AG04449 (cell line): ENCODE measurements at regions of chr22 and their contacts with region 1.

Region 1: DNA sequence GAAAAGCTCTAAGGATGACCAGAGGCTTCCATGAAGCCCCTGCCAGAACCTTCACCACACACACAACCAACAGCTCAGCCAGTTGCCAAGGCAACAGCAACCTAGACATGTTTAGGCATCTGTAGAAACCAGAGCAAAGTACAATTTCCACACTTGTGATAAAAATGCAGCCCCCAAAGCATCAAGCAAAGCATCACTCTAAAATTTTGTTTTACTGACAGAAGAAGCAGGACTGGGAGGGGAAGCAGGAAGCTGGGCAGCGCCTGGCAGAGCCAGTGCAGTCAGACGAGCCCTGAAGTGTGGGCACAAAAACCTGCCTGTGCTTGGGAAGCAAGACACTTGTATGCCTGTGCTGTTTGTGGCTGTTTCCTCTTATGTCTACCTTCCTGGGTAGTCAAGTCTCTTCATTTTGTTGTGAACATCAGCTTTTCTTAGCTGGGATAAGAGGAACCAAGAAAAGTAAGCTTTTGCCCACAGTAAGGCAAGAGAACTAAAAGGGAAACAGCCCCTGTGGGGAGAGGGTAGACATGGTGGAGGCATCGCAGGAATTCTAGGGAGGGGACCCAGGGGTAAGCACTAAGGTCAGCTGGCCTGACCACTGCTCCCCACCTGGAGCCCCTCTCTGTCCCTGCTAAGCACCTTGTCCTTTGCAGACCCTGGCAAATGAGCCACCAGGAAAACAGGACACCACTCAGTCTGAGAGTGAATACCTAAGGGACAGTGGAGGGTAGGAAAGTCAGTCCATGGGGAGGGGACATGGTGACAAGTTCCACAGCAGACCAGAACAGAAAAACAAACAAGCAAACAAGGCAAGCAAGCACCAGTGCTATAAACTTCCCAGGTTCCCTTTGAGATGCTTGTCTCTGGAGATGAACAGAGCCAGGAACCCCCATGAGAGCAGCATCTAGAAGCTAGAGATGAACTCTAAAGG is 13.4 kb downstream of the PACSIN2 start:
- DNase-seq: no peak
- H3K4me3 ChIP-seq: peak overlapping the region; percentile 38
- CTCF ChIP-seq: no peak

Region 2: DNA sequence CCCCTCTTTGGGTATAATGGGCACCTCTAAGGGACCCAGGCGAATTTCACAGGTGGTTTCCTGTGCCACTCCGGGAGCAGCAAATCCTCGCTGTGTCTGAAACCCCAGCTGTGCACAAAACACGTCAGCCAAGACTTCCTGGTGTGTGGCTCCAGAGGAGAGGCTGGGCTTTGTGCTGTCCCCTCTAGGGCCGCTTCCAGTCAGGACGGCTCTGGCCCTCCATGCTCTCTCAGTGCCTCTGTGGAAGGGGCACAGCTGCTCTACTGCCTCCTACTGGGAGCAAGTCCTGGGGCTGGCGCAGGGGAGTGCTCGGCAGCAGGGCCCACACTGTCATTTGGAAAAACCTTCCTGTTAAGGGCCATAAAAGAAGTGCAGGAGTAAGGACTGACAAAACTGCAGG is 120.7 kb before region 1 on chr22:
- CTCF ChIA-PET with region 1: no interaction called
- POLR2A ChIA-PET with region 1: no interaction called
- DNase-seq: no peak
- H3K4me3 ChIP-seq: no peak overlapping the region
- CTCF ChIP-seq: no peak

Region 3: GRCh38 chr22:43014869-43015676 is 13.5 kb after region 1 on chr22 and contains the start of gene PACSIN2:
- CTCF ChIA-PET with region 1: interaction called, 15 read pairs
- POLR2A ChIA-PET with region 1: interaction called, 46 read pairs
- DNase-seq: peak; percentile 88
- H3K4me3 ChIP-seq: peak within 1 kb of the TSS; percentile 83
- CTCF ChIP-seq: no peak